ENCODE measurements at regions of chr14 and their contacts with region 1.

Region 1: GRCh38 chr14:75542588-75543091 is 20.4 kb downstream of the BATF start:
- DNase-seq: peak; percentile 82
- CTCF ChIP-seq: no peak

Region 2: GRCh38 chr14:75531660-75532317 is 10.9 kb before region 1 on chr14:
- CTCF ChIA-PET with region 1: interaction called, 12 read pairs
- POLR2A ChIA-PET with region 1: interaction called, 6 read pairs
- DNase-seq: no peak
- CTCF ChIP-seq: no peak